ENCODE measurements at regions of chr7 and their contacts with region 1.

Region 1: GRCh38 chr7:18352339-18353255 is 143.0 kb upstream of the HDAC9 start:
- DNase-seq: peak in 2 of 4 donors; percentile 14 to 45
- ATAC-seq: peak; percentile 84
- H3K4me3 ChIP-seq: no peak overlapping the region
- H3K27ac ChIP-seq: no peak overlapping the region
- H3K4me1 ChIP-seq: peaks cover 0 to 4% of the 10 kb centered on the region in 2 donors
- H3K27me3 ChIP-seq: no peaks in the 10 kb centered on the region
- CTCF ChIP-seq: peak; percentile 21 to 34

Region 2: DNA sequence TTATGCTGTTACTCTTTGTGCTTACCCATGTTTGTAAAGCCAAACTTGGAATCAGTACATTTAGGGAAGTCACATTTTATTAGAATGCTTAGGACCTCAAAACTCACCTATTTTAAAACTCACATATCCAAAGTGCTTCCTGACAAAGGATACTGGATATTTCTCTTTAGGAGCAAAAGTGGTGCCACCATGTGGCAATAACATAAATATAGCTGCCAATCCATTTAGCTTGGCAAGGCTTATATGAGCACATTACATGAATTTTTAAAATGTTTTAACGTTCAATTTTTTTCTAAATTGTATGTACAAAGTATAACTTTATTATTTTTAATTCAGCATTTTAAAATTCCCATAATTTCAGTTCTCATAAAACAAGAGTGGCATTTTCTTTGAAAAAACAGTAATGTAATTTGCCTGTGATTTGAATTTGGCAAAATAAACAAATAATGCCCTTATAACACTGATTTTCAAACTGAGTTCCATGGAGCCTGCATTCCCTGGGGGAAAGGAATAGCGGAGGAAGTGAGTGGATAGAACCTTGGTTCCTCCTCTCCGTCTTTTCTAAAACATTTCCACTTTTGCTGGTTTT is 218.4 kb after region 1 on chr7:
- intact Hi-C with region 1: loop called in 1 of 2 experiments (anchors 5 kb)
- DNase-seq: peak in 1 of 4 donors; percentile 19
- ATAC-seq: peak; percentile 54
- H3K4me3 ChIP-seq: no peak overlapping the region
- H3K27ac ChIP-seq: no peak overlapping the region
- H3K4me1 ChIP-seq: no peaks in the 10 kb centered on the region
- H3K27me3 ChIP-seq: no peaks in the 10 kb centered on the region
- CTCF ChIP-seq: peak; percentile 10 to 35

Measured in left lung (tissue), 14 donors.